Activated CD4-positive, alpha-beta T cell treated with anti-CD3 and anti-CD28 coated beads for 36 hours (primary cell): ENCODE measurements at regions of chr7 and their contacts with region 1.

Region 1: GRCh38 chr7:105387621-105388372 is 924 bp downstream of the SRPK2 start:
- DNase-seq: peak; percentile 67
- ATAC-seq: peak; percentile 40
- H3K4me3 Mint-ChIP-seq: peak overlapping the region; percentile 77
- H3K27ac Mint-ChIP-seq: peak overlapping the region; percentile 55
- H3K4me1 Mint-ChIP-seq: peaks cover 35% of the 10 kb centered on the region
- H3K27me3 Mint-ChIP-seq: no peaks in the 10 kb centered on the region

Region 2: DNA sequence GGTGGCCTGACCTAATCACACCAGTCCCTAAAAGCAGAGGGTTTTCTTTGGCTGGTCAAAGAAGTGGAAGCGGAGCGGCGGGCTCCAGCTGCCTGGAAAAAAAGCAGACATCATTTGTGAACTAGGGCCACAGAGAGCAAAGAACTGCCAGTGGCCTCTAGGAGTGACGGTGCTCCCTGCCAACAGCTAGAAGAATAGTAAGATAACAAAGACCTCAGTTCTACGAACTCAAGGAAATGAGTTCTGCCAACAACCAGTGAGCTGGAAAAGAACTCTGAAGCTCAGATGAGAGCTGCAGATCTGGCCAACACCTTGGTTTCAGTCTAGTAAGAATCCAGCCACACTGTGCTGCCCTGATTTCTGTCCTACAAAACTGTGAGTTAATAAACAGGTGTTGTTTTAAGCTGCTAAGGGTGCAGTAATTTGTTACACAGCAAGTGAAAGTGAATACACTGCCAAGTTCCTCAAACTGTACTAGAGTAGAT is 177.0 kb before region 1 on chr7:
- CTCF ChIA-PET with region 1: no interaction called
- POLR2A ChIA-PET with region 1: no interaction called
- intact Hi-C with region 1: loop called in 1 of 2 experiments (anchors 5 kb)
- DNase-seq: no peak
- ATAC-seq: no peak
- H3K4me3 Mint-ChIP-seq: no peak overlapping the region
- H3K27ac Mint-ChIP-seq: peak overlapping the region; percentile 38
- H3K4me1 Mint-ChIP-seq: peaks cover 81% of the 10 kb centered on the region
- H3K27me3 Mint-ChIP-seq: no peaks in the 10 kb centered on the region

Region 3: DNA sequence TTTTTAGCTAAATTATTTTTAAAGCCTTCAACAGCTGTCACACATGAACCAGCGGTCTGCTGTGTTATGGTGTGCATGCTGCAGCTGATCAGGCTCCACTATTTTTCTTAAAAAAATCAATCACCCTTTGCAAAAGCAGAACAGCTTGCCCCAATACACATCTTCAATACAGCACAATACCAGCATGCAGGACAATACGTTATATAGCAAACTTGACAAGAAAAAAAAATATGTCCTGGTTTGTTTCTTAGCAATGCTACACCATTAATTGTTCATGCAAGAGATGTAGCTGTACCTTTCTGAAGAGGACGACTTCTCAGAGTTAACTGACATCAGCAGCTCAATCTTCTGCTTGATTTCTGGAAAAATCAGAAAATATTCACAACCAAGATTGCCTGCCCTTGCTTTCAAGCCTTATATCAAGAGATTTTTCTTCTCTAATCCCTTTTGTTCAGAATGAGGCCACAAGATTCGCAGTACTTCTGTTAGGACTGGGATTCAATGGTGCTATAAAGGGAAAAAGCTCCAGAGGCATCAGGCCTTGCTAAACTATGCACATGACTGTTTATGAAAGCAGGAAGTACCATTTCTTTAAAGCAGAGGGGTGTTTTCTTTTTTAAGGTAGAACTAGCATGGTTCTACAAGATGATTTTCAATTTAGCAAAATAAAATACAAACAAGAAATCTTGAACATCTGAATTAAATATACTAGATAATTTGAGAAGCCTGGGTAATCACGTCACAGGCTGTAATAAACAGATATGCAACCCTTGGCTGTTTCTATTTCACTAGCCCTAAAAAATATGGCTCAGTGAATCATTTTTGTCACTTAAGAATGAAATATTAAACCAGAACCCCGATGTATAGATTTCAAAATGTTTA is 119.0 kb before region 1 on chr7:
- CTCF ChIA-PET with region 1: interaction called, 3 read pairs
- POLR2A ChIA-PET with region 1: no interaction called
- intact Hi-C with region 1: loop called in 1 of 2 experiments (anchors 1 kb)
- DNase-seq: no peak
- ATAC-seq: peak; percentile 65
- H3K4me3 Mint-ChIP-seq: peak overlapping the region; percentile 78
- H3K27ac Mint-ChIP-seq: peak overlapping the region; percentile 96
- H3K4me1 Mint-ChIP-seq: peaks cover 63% of the 10 kb centered on the region
- H3K27me3 Mint-ChIP-seq: no peaks in the 10 kb centered on the region

Region 4: DNA sequence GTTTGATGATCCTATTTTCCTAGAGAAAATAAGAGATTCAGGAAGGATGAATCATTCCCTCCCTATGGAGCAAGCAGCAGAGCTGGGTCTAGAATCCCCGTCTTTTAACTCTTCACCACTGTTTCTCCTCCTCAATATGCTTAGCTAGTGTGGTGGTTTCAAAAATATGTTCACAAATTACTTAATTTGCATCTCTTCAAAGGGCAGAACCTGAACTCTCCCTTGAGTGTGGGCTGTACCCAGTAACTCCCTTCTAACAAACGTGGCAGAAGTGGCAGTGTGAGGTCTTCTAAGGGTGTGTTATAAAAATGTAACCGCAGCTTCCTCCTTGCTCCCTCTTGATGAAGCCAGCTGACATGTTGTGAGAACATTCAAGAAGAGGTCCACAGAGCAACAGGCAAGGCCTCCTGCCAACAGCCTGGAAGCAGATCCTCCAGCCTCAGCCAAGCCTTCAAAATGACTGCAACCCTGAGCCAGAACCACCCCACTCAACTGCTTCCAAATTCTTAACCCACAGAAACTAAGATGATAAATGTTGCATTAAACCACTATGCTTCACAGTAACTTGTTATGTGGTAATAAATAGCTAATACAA is 35.7 kb before region 1 on chr7:
- CTCF ChIA-PET with region 1: no interaction called
- POLR2A ChIA-PET with region 1: no interaction called
- intact Hi-C with region 1: loop called in 1 of 2 experiments (anchors 5 kb)
- DNase-seq: peak; percentile 63
- ATAC-seq: peak; percentile 92
- H3K4me3 Mint-ChIP-seq: peak overlapping the region; percentile 15
- H3K27ac Mint-ChIP-seq: peak overlapping the region; percentile 91
- H3K4me1 Mint-ChIP-seq: peaks cover 71% of the 10 kb centered on the region
- H3K27me3 Mint-ChIP-seq: no peaks in the 10 kb centered on the region

Region 5: DNA sequence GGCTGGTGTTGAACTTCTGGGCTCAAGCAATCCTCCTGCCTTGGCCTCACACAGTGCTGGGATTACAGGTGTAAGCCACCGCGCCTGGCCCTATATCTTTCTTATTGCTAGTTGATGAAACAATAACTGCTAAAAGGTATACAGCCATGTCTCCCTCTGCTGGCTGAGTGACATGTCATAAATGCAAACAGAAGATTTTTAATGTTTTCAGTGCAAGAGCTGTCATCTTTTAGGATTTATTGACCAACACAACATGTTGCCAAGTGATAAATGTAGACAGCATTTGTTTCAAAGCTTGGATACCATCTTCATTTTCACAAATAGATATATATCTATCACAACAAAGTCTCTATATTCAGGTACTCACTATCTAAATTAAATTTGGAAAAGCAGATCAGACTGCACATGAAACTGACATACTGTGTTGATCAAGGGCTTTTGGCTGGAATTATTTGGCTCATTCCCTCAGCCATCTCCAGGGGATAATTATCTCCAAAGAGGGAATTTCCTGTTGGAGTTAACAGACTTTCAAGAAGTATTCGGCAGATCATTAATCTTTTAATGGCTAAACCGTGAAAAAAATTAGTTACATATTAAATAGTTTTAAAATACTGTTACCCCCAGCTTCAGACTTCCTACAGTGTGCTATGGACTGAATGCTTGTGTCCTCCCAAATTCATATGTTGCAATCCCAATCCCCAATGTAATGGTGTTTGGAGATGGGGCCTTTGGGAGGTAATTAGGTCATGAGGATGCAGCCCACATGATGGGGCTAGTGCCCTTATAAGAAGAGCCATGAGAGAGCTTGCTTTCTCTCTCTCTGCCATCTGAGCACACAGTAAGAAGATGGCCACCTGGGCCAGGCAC is 42.2 kb after region 1 on chr7:
- CTCF ChIA-PET with region 1: no interaction called
- POLR2A ChIA-PET with region 1: no interaction called
- intact Hi-C with region 1: loop called in 1 of 2 experiments (anchors 2 kb)
- DNase-seq: peak; percentile 74
- ATAC-seq: no peak
- H3K4me3 Mint-ChIP-seq: no peak overlapping the region
- H3K27ac Mint-ChIP-seq: no peak overlapping the region
- H3K4me1 Mint-ChIP-seq: peaks cover 19% of the 10 kb centered on the region
- H3K27me3 Mint-ChIP-seq: no peaks in the 10 kb centered on the region

Region 6: DNA sequence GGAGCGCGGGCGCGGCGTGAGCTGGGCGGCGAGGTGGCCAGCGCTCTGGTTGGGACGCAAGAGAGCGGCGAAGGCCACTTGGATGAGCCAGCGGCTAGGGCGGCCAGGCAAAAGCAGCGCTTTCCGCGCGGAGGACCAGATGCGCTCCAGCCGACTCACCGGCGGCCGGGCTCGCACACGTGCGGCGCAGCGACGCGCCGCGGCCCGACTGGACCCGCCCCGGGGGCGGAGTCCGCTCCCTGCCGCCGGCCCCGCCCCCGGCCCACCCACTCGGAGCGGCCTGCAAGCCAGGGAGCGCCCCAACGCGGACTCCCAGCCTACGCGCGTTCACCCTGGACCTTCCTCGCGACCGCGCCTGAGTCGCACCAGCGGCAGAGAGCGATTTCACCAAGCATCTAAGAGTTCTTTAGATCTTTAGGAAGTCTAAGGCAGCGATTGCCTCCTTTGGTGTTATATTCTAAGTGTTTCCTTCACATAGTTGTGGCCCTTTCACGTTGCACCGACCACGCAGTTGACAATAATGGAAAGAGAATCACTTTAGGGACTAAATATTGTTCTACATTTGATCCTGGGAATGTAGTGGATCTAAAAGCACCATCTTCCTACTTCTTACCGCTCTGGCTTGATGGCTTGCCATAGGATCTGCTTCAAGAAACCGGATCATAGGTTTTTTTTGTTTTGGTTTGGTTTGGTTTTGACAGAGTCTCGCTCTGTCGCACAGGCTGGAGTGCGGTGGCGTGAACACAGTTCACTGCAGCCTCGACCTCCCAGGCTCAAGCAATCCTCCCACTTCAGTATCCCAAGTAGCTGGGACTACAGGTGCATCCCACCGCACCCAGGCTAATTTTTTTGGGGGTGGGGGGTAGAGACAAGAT is 134.5 kb after region 1 on chr7 and contains the start of gene PUS7:
- CTCF ChIA-PET with region 1: no interaction called
- POLR2A ChIA-PET with region 1: no interaction called
- intact Hi-C with region 1: loop called in 1 of 2 experiments (anchors 1 kb)
- DNase-seq: peak; percentile 91
- ATAC-seq: peak; percentile 89
- H3K4me3 Mint-ChIP-seq: peak within 1 kb of the TSS; percentile 92
- H3K27ac Mint-ChIP-seq: peak within 1 kb of the TSS; percentile 90
- H3K4me1 Mint-ChIP-seq: peaks cover 17% of the 10 kb centered on the region
- H3K27me3 Mint-ChIP-seq: no peaks in the 10 kb centered on the region
- total RNA-seq, gene PUS7: 31.9 to 33.8 TPM

Region 7: GRCh38 chr7:105531792-105532671 is 144.2 kb after region 1 on chr7 and contains the start of gene RINT1:
- CTCF ChIA-PET with region 1: no interaction called
- POLR2A ChIA-PET with region 1: no interaction called
- intact Hi-C with region 1: loop called in 1 of 2 experiments (anchors 1 kb)
- DNase-seq: peak; percentile 94
- ATAC-seq: peak; percentile 94
- H3K4me3 Mint-ChIP-seq: peak within 1 kb of the TSS; percentile 91
- H3K27ac Mint-ChIP-seq: peak within 1 kb of the TSS; percentile 91
- H3K4me1 Mint-ChIP-seq: peaks cover 23% of the 10 kb centered on the region
- H3K27me3 Mint-ChIP-seq: no peaks in the 10 kb centered on the region
- total RNA-seq, gene RINT1: 21.2 to 26.2 TPM